Endothelial cell of umbilical vein (primary cell): ENCODE measurements at regions of chr19 and their contacts with region 1.

Region 1: DNA sequence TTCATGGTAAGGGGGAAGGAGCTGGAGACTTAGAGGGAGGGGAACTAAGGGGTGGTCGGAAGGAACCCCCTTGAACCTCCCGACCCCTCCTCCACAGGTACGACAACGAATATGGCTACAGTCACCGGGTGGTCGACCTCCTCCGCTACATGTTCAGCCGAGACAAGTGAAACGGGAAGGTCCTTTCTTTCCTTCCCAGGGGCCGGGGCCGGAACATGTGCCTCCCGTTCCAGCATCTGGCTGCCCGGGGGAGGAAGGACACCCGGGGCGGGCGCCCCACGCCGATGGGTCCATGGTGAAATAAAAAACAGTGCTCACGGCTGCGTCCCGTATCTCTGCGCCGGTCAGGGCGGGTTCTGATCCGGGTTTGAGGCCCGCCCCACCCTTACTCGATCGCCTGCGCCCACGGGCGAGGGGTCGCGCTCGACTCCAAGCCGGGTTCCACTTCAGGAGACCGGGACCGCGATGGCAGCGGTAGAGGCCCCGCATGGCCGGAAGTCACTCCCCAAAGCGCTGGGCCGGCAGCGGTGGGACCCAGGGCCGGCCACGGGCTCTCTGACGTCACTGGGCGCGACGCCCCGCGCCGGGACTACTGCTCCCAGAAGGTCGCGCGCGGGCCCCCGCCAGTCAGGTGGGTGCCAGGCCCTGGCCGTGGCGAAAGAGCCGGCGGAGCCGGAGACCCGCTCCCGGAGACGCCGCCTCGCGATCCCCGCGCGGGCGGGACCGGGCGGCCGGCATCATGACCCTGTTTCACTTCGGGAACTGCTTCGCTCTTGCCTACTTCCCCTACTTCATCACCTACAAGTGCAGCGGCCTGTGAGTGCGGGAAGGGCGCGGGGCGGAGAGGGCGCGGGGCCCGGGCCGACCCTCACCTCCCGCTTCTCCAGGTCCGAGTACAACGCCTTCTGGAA is at the start of gene TMEM147:
- DNase-seq: peak; percentile 82
- H3K4me3 ChIP-seq: peak within 1 kb of the TSS; percentile 77 to 88 (median 88)
- H3K27ac ChIP-seq: peak within 1 kb of the TSS; percentile 79
- H3K4me1 ChIP-seq: peaks cover 16% of the 10 kb centered on the region
- H3K27me3 ChIP-seq: no peaks in the 10 kb centered on the region
- CTCF ChIP-seq: no peak
- POLR2A ChIP-seq: peak; percentile 87
- total RNA-seq, gene TMEM147: 75.8 and 76.1 TPM in 2 replicates

Region 2: DNA sequence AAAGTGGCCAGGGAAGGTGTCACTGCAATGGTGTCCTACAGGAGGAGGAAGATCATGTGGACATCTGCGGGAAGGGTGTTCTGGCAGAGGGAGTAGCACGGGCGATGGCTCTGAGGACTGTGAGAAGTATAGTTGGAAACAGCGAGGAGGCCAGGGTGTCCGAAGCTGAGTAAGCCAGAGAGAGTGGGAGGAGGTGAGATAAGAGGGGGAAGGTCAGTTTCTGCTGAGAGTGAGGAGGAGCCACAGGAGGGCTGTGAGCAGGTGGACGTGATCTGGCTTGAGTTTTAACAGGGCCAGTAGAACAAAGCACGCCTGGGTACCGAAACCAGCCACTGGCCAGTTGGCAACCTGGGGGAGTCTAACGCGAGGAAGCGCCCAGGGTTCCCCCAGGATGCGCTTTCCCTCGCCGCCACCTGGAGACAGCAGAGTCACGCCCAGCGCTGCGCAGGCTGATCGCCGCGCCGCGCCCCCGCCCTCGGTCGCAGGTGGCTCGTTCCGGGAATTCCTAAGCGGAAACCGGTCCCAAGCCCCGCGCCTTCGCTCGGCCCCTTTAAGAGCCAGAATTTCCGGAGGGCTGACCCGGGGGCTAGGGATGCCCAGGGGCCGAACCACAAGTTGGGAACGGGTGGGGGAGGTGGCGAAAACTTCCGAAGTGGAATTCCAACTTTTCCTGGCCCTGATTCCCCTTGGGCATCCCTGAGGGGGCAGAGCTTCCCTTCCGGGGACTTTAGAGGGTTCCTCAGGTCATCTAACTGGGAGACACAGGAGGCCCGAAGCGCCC is 297.5 kb before region 1 on chr19:
- CTCF ChIA-PET with region 1: no interaction called
- POLR2A ChIA-PET with region 1: no interaction called
- dilution Hi-C with region 1: no loop called
- intact Hi-C with region 1: no loop called
- DNase-seq: no peak
- H3K4me3 ChIP-seq: no peak overlapping the region
- H3K27ac ChIP-seq: no peak overlapping the region
- H3K4me1 ChIP-seq: no peaks in the 10 kb centered on the region
- H3K27me3 ChIP-seq: peaks cover 26 to 49% of the 10 kb centered on the region in 2 experiments
- CTCF ChIP-seq: peak in 1 of 2 donors; percentile 11
- POLR2A ChIP-seq: no peak

Region 3: GRCh38 chr19:35509861-35510625 is 35.2 kb before region 1 on chr19:
- CTCF ChIA-PET with region 1: interaction called, 12 read pairs
- POLR2A ChIA-PET with region 1: no interaction called
- dilution Hi-C with region 1: no loop called
- intact Hi-C with region 1: no loop called
- DNase-seq: peak; percentile 30
- H3K4me3 ChIP-seq: no peak overlapping the region
- H3K27ac ChIP-seq: no peak overlapping the region
- H3K4me1 ChIP-seq: no peaks in the 10 kb centered on the region
- H3K27me3 ChIP-seq: peaks cover 33 to 40% of the 10 kb centered on the region in 2 experiments
- CTCF ChIP-seq: peak; percentile 88 to 94
- POLR2A ChIP-seq: no peak

Region 4: GRCh38 chr19:35557539-35558399 is 12.5 kb after region 1 on chr19:
- CTCF ChIA-PET with region 1: interaction called, 18 read pairs
- POLR2A ChIA-PET with region 1: no interaction called
- dilution Hi-C with region 1: no loop called
- intact Hi-C with region 1: no loop called
- DNase-seq: peak; percentile 71
- H3K4me3 ChIP-seq: peak overlapping the region; percentile 25 to 36 (median 29)
- H3K27ac ChIP-seq: no peak overlapping the region
- H3K4me1 ChIP-seq: no peaks in the 10 kb centered on the region
- H3K27me3 ChIP-seq: peaks cover 0 to 4% of the 10 kb centered on the region in 2 experiments
- CTCF ChIP-seq: no peak
- POLR2A ChIP-seq: no peak

Region 5: GRCh38 chr19:35612559-35613321 is 67.5 kb after region 1 on chr19 and contains the start of gene HAUS5:
- CTCF ChIA-PET with region 1: interaction called, 3 read pairs
- POLR2A ChIA-PET with region 1: no interaction called
- dilution Hi-C with region 1: no loop called
- intact Hi-C with region 1: loop called (anchors 1 kb)
- DNase-seq: peak; percentile 94
- H3K4me3 ChIP-seq: peak within 1 kb of the TSS; percentile 76 to 86 (median 84)
- H3K27ac ChIP-seq: peak within 1 kb of the TSS; percentile 70
- H3K4me1 ChIP-seq: peaks cover 3% of the 10 kb centered on the region
- H3K27me3 ChIP-seq: no peaks in the 10 kb centered on the region
- CTCF ChIP-seq: no peak
- POLR2A ChIP-seq: peak; percentile 65
- total RNA-seq, gene HAUS5: 17.5 and 19.0 TPM in 2 replicates

Region 6: DNA sequence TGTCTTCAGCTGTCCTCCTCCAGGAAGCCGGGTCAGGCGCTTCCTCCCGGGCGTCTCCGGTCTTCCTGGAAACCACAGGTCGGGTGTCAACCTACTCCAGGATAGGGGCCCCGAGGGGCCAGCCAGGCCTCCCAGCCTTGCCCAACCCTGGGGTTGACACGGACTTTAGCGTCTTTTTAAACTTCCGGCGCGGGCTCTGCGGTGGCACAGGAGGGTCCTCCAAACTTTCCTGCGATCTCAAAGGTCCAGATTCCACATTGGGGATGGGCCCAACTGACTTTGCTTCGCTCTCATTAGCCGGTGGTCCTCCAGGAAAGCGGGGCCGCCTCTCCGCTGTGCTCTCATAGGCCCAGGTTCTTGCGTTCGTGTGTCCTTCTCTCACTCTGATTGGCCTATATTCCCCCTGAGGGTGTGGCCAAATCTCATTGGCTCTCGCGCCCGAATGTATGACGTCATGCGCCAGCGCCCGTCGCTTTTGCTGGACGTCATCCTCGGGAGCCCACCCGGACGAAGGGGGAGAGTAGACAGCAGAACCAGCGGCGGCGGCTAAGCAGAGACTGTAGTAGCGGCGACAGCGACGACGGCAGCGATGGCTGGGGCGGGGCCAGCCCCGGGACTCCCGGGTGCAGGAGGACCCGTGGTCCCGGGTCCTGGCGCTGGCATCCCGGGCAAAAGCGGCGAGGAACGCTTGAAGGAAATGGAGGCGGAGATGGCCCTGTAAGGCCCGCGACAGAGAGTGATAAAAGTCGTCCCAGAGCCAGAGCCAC is 83.5 kb after region 1 on chr19 and contains the start of gene RBM42:
- CTCF ChIA-PET with region 1: no interaction called
- POLR2A ChIA-PET with region 1: no interaction called
- dilution Hi-C with region 1: no loop called
- intact Hi-C with region 1: loop called (anchors 5 kb)
- DNase-seq: peak; percentile 99
- H3K4me3 ChIP-seq: peak within 1 kb of the TSS; percentile 70 to 98 (median 76)
- H3K27ac ChIP-seq: peak within 1 kb of the TSS; percentile 53
- H3K4me1 ChIP-seq: peaks cover 10% of the 10 kb centered on the region
- H3K27me3 ChIP-seq: no peaks in the 10 kb centered on the region
- CTCF ChIP-seq: no peak
- POLR2A ChIP-seq: peak; percentile 33
- total RNA-seq, gene RBM42: 97.3 and 99.2 TPM in 2 replicates

Region 7: DNA sequence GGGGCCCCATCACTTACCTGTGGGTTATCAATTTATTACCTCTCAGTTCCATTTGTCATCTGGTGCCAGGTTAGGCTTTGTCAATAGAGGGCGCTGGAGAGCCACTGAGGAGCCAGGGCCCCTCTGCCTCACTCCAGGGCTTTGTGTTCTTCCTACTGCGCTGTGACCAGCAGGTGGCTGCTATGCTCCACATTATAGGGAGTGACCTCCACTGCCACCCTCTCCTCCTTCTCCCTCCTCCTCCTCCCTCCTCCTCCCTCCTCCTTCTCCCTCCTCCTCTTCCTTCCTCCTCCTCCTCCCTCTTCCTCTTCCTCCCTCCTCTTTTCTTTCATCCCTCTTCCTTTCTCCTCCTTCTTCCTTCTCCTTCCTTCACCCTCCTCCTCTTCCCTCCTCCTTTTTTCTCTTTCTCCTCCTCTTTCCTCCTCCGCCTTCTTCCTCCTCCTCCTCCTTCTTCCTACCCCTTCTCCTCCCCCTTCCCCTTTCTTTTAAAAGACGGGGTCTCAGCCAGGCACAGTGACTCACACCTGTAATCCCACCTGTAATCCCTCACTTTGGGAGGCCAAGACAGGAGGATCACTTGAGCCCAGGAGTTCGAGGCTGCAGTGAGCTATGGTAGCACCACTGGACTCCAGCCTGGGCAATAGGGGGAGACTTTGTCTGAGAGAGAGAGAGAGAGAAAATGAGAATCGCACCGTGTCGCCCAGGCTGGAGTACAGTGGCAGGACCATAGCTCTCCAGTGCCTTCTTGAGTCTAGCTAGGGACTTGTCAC is 148.8 kb after region 1 on chr19:
- CTCF ChIA-PET with region 1: no interaction called
- POLR2A ChIA-PET with region 1: no interaction called
- dilution Hi-C with region 1: no loop called
- intact Hi-C with region 1: loop called (anchors 5 kb)
- DNase-seq: peak; percentile 78
- H3K4me3 ChIP-seq: no peak overlapping the region
- H3K27ac ChIP-seq: no peak overlapping the region
- H3K4me1 ChIP-seq: no peaks in the 10 kb centered on the region
- H3K27me3 ChIP-seq: no peaks in the 10 kb centered on the region
- CTCF ChIP-seq: peak; percentile 97
- POLR2A ChIP-seq: no peak